H1 (cell line): ENCODE measurements at regions of chr17 and their contacts with region 1.

Region 1: GRCh38 chr17:2844416-2844815 is 48.2 kb downstream of the RAP1GAP2 start:
- DNase-seq: no peak
- H3K4me3 ChIP-seq: no peak overlapping the region
- H3K27ac ChIP-seq: no peak overlapping the region
- H3K4me1 ChIP-seq: peaks cover 6 to 15% (median 6%) of the 10 kb centered on the region in 4 experiments; a peak in 5 of 7 replicates
- H3K27me3 ChIP-seq: no peaks in the 10 kb centered on the region
- CTCF ChIP-seq: no peak
- EP300 ChIP-seq: no peak
- POLR2A ChIP-seq: no peak
- RAD21 ChIP-seq: no peak

Region 2: GRCh38 chr17:2828397-2829038 is 15.9 kb before region 1 on chr17:
- CTCF ChIA-PET with region 1: interaction called, 92 read pairs
- POLR2A ChIA-PET with region 1: no interaction called
- DNase-seq: peak; percentile 81 to 99
- H3K4me3 ChIP-seq: no peak overlapping the region
- H3K27ac ChIP-seq: no peak overlapping the region
- H3K4me1 ChIP-seq: peaks cover 0 to 3% (median 1%) of the 10 kb centered on the region in 4 experiments; a peak in 5 of 7 replicates
- H3K27me3 ChIP-seq: no peaks in the 10 kb centered on the region
- CTCF ChIP-seq: peak; percentile 96 to 98 (median 97)
- EP300 ChIP-seq: peak in 1 of 2 experiments; percentile 60; a peak in 1 of 3 replicates
- POLR2A ChIP-seq: no peak
- RAD21 ChIP-seq: peak; percentile 97 to 98

Region 3: DNA sequence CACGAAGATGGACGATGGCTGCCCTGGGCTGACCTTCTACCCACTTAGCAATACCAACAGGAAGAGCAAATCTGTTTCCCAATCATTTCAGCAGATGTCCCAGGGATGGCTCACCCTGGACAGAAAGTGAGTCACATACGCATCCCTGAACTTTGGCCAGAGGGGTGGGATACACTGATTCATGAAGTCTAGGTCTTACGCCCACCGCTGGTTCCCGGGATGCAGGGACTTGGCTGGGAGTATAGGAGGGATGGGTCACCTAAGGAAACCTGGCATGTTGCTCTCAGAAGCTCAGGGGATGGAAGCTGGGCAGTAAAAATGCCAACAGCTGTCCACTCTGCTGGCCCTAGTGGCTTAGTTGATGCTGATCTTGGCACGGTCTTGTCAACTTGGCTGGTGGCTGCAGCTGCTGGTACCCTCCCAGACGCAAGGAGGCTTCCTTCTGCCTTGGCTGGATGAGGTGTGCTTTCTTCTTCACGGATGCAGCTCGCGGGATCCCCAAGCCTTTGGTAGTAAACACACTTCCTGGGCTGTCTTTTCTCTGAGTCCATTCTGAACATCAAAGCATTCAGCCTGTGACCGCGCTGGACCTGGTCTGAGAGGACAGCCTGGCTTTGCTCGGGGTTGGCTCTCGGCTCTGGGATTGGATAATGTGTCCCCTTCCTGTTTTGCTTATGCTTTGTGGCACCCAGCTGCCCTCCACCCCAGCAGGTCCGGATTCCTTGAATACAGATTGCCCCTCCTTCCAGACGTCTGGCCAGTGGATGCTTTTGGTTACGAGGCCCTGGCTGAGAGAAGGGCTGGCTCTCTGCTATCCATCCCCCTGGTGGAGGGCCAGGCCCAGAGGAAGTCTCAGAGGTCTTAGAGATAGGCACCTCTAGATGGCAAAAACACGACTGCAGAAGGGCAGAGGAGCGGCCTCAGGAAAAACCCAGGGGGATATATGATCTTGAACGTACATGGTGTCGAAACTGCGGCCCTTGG is 23.3 kb after region 1 on chr17:
- CTCF ChIA-PET with region 1: interaction called, 50 read pairs
- POLR2A ChIA-PET with region 1: interaction called, 8 read pairs
- DNase-seq: peak in 1 of 2 experiments; percentile 67
- H3K4me3 ChIP-seq: no peak overlapping the region
- H3K27ac ChIP-seq: peak overlapping the region; percentile 21; the same call in 1 of the 2 replicates
- H3K4me1 ChIP-seq: peaks cover 11 to 33% (median 28%) of the 10 kb centered on the region in 4 experiments
- H3K27me3 ChIP-seq: no peaks in the 10 kb centered on the region
- CTCF ChIP-seq: peak; percentile 33 to 62 (median 52)
- EP300 ChIP-seq: no peak
- POLR2A ChIP-seq: no peak
- RAD21 ChIP-seq: peak; percentile 40 to 52

Region 4: DNA sequence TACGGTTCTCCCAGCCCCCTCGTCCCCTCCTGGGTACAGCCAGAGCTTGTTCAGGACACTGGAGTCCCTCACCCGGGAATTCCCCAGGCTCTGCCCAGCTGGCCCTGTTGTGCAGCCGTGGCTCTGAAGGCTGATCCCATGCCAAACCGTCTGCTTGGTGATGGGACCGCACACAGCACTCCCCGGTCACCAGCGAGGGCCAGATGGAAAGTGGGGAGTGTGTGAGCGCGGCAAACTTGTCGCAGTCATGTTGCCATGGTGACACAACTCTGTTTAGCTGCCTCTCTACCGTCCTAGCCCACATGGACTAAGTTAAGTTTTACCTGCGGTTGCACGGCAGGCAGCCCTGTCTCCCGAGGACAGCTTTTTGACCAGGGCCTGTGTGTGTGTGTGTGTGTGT is 59.7 kb after region 1 on chr17:
- CTCF ChIA-PET with region 1: interaction called, 12 read pairs
- POLR2A ChIA-PET with region 1: interaction called, 3 read pairs
- DNase-seq: no peak
- H3K4me3 ChIP-seq: no peak overlapping the region
- H3K27ac ChIP-seq: peak overlapping the region; percentile 35; the same call in 1 of the 2 replicates
- H3K4me1 ChIP-seq: peaks cover 0 to 16% (median 10%) of the 10 kb centered on the region in 4 experiments; a peak in 6 of 7 replicates
- H3K27me3 ChIP-seq: no peaks in the 10 kb centered on the region
- CTCF ChIP-seq: no peak
- EP300 ChIP-seq: no peak
- POLR2A ChIP-seq: no peak
- RAD21 ChIP-seq: no peak

Region 5: DNA sequence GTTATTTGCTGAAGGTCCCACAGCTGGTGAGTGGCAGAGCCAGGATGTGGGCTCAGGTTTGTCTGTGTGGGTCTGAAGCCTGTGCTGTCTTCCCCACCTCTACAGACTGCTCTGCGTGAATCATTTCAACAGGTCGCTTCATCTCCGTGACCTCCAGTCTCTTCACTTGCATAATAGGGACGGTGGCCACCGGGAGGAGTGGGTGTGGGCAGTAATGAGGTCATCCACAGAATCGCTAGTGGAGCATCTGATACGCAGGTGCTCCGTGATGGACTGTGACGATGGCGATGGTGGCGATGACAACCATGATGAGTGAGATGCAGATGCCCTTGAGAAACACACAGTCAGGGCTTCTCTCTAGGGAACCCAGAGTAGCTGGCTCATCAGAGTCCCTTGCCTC is 72.0 kb after region 1 on chr17:
- CTCF ChIA-PET with region 1: interaction called, 233 read pairs
- POLR2A ChIA-PET with region 1: no interaction called
- DNase-seq: no peak
- H3K4me3 ChIP-seq: no peak overlapping the region
- H3K27ac ChIP-seq: no peak overlapping the region
- H3K4me1 ChIP-seq: no peaks in the 10 kb centered on the region; a peak in 1 of 7 replicates
- H3K27me3 ChIP-seq: no peaks in the 10 kb centered on the region
- CTCF ChIP-seq: no peak
- EP300 ChIP-seq: no peak
- POLR2A ChIP-seq: no peak
- RAD21 ChIP-seq: no peak

Region 6: DNA sequence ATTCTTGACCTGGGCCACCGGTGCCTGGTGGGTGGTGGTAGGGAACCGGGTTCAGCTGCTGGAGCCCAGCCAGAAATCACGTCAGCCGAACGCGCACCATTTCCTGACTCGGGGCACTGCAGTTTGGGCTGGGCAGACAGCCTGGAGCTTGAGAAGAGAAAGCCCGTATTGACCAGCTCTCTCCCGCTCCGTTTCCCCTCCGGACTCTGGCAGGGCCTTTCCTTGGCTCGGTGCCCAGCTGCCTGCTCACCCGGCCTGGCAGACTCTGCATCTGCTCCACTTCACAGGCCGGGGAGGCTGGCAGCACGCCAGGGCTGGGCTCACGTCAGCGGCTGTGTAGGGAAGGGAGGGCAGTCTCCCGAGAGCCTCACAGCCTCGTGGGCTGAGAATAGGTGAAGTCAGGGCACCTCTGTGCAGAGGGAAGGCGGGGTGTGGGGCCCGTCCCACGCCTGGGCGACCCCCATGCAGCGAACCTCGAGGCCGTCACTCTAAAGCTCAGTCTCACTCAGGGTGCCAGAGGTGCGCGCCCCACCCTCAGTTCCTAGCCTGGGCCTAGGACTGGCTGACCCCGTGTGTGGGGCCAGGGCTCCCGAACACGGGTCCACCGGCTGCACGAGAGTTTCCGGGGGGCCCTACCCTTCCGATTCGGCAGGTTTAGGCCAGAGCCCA is 159.9 kb after region 1 on chr17:
- CTCF ChIA-PET with region 1: interaction called, 35 read pairs
- POLR2A ChIA-PET with region 1: no interaction called
- DNase-seq: no peak
- H3K4me3 ChIP-seq: no peak overlapping the region
- H3K27ac ChIP-seq: no peak overlapping the region
- H3K4me1 ChIP-seq: no peaks in the 10 kb centered on the region
- H3K27me3 ChIP-seq: no peaks in the 10 kb centered on the region
- CTCF ChIP-seq: no peak
- EP300 ChIP-seq: no peak
- POLR2A ChIP-seq: no peak
- RAD21 ChIP-seq: no peak